Breast epithelium (tissue), 4 donors: ENCODE measurements at regions of chr1 and their contacts with region 1.

Region 1: GRCh38 chr1:108851567-108851966 is 5.3 kb downstream of the AKNAD1 start:
- DNase-seq: no peak
- H3K4me3 ChIP-seq: no peak overlapping the region
- H3K27ac ChIP-seq: peak overlapping the region; percentile 52 to 71
- H3K4me1 ChIP-seq: no peaks in the 10 kb centered on the region
- H3K27me3 ChIP-seq: no peaks in the 10 kb centered on the region
- CTCF ChIP-seq: no peak
- POLR2A ChIP-seq: no peak

Region 2: DNA sequence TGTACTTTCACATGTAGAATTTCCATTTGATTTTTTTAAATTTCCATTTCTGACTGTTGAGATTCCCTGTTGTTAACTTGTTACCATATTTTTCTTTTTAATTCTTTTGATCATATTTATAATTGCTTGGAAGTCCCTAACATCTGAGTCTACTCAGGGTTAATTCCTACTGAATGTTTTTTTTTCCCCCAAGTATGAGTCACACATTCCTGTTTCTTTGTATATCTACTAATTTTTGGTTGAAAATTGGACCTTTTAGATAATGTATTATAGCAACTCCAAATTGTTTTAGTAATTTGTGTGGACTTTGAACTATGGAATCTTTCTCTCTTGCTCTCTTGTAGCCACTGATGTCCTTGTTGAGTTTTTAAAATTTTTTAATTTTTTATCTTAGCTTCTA is 50.5 kb before region 1 on chr1:
- intact Hi-C with region 1: no loop called
- DNase-seq: no peak
- H3K4me3 ChIP-seq: no peak overlapping the region
- H3K27ac ChIP-seq: no peak overlapping the region
- H3K4me1 ChIP-seq: no peaks in the 10 kb centered on the region
- H3K27me3 ChIP-seq: no peaks in the 10 kb centered on the region
- CTCF ChIP-seq: no peak
- POLR2A ChIP-seq: no peak

Region 3: DNA sequence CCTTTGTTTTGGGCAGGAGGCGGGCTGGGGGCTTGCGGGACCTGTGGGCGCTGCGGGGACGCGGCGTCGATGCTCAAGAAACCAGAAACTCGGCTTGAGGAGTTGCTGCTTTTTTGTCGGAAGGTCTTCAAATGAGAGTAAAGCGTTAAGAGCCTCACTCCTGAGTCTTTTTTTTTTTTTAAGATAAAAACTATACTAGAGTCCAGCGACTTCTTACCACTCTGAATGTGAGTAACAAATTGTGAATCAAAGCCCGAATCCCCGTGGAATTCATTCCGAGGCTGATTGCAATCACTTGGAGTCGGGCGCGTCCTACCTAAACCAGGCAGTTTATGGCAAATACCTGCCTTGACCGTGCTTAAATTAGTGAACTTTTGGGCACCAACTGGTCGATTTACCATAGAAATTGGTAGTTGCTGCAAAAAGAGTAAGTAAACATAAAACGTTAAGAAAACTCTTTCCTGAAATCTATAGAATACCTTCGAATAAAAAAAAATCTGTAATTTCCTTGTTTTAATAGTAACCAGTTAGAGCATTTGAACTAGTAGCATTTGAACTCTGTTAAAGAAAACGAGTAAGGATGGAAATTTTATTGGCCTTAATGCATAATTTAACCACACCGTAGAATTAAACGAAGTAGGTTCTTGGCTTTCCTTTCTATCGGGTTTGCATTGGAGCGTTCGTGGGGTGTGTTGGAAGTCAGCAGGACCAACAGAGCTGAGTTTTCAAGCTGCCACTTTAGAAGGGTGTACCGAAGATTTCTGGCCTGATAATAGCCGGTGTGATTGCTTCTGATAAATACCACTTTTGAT is 26.0 kb after region 1 on chr1:
- intact Hi-C with region 1: loop called (anchors 1 kb)
- DNase-seq: no peak
- H3K4me3 ChIP-seq: peak overlapping the region; percentile 78 to 97 (median 91)
- H3K27ac ChIP-seq: peak overlapping the region; percentile 69
- H3K4me1 ChIP-seq: no peaks in the 10 kb centered on the region
- H3K27me3 ChIP-seq: no peaks in the 10 kb centered on the region
- CTCF ChIP-seq: no peak
- POLR2A ChIP-seq: no peak